Posterior vena cava (tissue), 2 donors: ENCODE measurements at regions of chrX and their contacts with region 1.

Region 1: DNA sequence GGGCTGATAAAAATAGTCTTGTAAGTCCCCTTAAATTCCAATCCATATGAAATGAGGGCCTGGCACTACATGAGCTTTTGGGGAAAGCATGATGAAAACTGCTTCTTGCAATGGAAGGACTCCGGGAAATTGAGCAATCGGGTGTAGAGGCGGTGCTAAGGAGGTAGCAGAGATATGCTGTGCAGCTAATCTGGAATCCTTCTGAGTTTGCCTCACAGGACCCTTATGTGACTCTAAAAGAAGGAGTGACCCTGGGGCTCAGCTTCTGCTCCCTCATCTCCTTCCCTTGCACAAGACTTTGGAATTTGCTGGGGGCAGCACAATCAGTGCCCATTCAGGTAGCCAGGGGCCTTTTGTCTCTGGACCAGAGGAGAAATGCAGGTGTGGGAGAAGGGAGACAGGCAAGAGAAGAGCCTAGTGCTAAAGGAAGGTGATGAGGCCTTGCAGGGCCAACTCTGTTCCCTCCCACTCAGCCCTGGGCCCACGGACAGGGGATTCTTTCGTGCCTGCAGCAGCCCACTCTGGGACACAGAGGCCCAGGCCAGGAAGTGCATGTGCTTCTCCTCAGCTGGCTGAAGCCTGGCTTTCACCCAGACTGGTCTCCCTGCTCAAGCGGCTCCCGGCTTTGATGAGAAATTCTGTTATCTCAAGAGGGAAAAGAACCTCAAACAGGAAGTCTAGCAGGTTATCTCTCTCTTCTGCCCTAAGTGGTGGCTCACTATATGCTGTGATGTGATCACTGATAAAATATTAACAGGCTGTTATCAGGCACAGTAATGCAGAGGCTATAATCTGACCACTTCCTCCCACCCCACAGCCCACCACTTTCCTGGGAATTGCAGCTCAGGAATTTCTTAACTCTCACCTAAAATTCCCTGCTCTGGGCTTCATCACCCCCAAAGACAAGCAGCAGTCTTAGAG is 13.1 kb downstream of the CLDN2 start:
- DNase-seq: peak; percentile 80

Region 2: GRCh38 chrX:106898462-106898861 is 34.8 kb before region 1 on chrX:
- intact Hi-C with region 1: loop called in 1 of 2 experiments (anchors 5 kb)
- DNase-seq: no peak

Region 3: GRCh38 chrX:107146670-107147069 is 213.4 kb after region 1 on chrX:
- intact Hi-C with region 1: no loop called
- DNase-seq: no peak